Motor neuron (in vitro differentiated cells): ENCODE measurements at regions of chr21 and their contacts with region 1.

Region 1: GRCh38 chr21:34614633-34615486 is at the start of gene RCAN1:
- ATAC-seq: peak; percentile 89 to 96 (median 94)
- H3K4me3 ChIP-seq: peak within 1 kb of the TSS; percentile 57 to 92 (median 69)
- H3K27ac ChIP-seq: peak within 1 kb of the TSS; percentile 18 to 60
- H3K4me1 ChIP-seq: peaks cover 4 to 6% of the 10 kb centered on the region in 2 donors
- total RNA-seq, gene RCAN1: 10.3 to 280 (median 22.7) TPM

Region 2: GRCh38 chr21:33915368-33916199 is 699.3 kb before region 1 on chr21 and contains the start of gene ATP5PO:
- in situ Hi-C with region 1: loop called in 2 of 9 experiments (anchors 10 to 25 kb)
- ATAC-seq: peak; percentile 96 to 100 (median 100)
- H3K4me3 ChIP-seq: peak within 1 kb of the TSS; percentile 61 to 93 (median 85)
- H3K27ac ChIP-seq: peak within 1 kb of the TSS; percentile 67 to 81
- H3K4me1 ChIP-seq: peaks cover 8 to 15% of the 10 kb centered on the region in 2 donors
- total RNA-seq, gene ATP5PO: 237 to 347 (median 278) TPM

Region 3: DNA sequence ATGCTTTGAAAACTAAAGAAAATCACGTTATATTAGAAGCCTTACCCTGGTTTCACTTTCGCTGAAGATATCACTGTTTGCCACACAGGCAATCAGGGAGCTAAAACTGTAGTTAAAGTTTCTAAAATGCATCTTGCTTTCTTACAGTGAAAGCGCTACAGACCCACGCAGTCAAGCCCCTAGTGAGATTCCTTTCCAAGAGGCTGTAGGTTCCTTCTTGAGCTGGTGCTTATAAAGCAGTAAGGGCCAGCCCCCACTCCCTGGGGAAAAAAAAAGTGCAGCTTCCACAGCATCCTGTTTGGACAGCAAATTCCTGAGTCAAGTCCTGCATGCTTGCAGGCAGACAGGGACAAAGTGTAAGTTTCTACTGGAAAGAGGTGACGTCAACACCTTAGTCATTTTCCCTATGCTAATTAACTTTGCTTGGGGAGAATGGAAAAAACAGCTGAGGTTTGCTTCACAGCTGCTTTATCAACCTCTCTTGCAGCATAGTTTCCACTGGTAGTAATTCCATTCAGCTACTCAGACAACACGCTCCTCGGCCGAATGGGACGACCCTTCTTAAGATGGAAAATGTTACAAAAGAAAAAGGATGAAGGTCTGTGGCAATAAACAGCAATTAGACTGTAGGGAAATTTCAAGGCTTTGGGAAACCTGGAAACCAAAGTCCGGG is 88.1 kb before region 1 on chr21:
- in situ Hi-C with region 1: no loop called
- ATAC-seq: peak; percentile 82 to 99 (median 96)
- H3K4me3 ChIP-seq: peak overlapping the region in 1 of 5 donors; percentile 17
- H3K27ac ChIP-seq: peak overlapping the region in 1 of 2 donors; percentile 68
- H3K4me1 ChIP-seq: peaks cover 0 to 12% of the 10 kb centered on the region in 2 donors

Region 4: GRCh38 chr21:34834852-34835501 is 220.1 kb after region 1 on chr21:
- in situ Hi-C with region 1: no loop called
- ATAC-seq: no peak
- H3K4me3 ChIP-seq: no peak overlapping the region
- H3K27ac ChIP-seq: no peak overlapping the region
- H3K4me1 ChIP-seq: no peaks in the 10 kb centered on the region